HEK293 (cell line): ENCODE measurements at regions of chr17 and their contacts with region 1.

Region 1: GRCh38 chr17:74457146-74457819 is 9.2 kb upstream of the CD300A start:
- H3K4me3 ChIP-seq: no peak overlapping the region
- H3K27ac ChIP-seq: no peak overlapping the region
- H3K4me1 ChIP-seq: peaks cover 8% of the 10 kb centered on the region
- CTCF ChIP-seq: peak; percentile 92

Region 2: DNA sequence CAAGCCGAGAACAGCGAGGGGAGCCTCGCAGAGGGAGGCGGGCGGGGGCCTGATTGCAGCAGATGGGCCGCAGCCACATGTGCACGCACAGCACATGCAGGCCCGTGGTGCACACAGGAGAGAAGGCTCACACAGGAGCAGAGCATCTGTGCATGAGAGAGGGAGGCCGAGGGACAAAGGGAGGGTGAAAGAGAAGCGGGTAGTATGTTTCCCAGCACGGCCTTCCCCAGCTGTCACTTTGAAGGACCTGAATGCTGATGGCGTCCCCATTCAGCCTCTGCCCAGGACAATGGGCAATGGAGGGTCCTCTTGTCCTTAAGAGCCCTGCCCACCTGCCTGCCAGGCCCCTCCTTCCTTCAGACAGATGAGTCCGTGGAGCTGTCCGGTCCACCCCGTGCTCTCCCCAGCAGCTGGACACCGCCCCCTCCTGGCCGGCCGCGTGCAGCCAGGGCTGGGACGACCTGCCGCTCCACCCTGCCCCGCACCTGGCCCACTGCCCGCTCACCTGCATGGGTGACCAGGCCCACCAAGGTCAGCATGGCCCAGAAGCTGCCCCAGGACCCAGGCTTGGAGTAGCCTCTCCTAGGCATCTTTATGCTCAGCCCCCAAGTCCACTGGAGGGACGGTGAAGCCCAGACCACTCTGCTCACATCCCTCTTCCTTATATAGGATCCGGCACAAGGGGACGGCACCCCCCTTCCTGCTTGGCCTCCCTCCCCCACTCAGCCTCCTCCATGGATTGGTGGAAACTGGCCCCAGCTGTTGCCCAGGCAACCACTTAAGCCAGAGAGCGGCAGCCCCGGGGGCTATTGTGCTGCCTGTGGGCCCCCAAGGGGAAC is 95.8 kb before region 1 on chr17 and contains the start of gene BTBD17:
- CTCF ChIA-PET with region 1: interaction called, 26 read pairs
- POLR2A ChIA-PET with region 1: interaction called, 5 read pairs
- H3K4me3 ChIP-seq: no peak within 1 kb of the TSS
- H3K27ac ChIP-seq: no peak within 1 kb of the TSS
- H3K4me1 ChIP-seq: no peaks in the 10 kb centered on the region
- CTCF ChIP-seq: peak; percentile 79

Region 3: DNA sequence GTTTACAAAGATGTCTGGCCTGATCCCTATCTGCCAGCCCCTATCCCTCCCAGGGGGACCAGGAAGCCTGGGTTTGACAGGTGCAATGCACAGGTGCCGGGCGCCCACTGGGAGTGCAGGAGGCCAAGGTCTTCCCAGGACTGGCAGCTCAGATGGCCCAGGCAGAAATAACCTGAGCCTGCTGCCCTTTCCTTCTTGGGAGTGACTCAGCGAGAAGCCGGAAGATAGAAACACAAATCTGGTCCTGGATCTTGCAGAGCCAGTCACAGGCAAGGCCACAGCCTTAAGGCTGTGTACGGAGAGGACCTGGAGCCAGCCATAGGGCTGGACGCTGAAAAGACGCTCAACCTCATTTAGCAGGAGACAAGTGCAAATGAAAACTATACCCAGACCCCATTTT is 62.3 kb before region 1 on chr17:
- CTCF ChIA-PET with region 1: interaction called, 24 read pairs
- POLR2A ChIA-PET with region 1: no interaction called
- H3K4me3 ChIP-seq: no peak overlapping the region
- H3K27ac ChIP-seq: no peak overlapping the region
- H3K4me1 ChIP-seq: no peaks in the 10 kb centered on the region
- CTCF ChIP-seq: no peak

Region 4: GRCh38 chr17:74424657-74425056 is 32.6 kb before region 1 on chr17:
- CTCF ChIA-PET with region 1: interaction called, 19 read pairs
- POLR2A ChIA-PET with region 1: interaction called, 7 read pairs
- H3K4me3 ChIP-seq: no peak overlapping the region
- H3K27ac ChIP-seq: no peak overlapping the region
- H3K4me1 ChIP-seq: no peaks in the 10 kb centered on the region
- CTCF ChIP-seq: no peak

Region 5: GRCh38 chr17:74437702-74438101 is 19.6 kb before region 1 on chr17:
- CTCF ChIA-PET with region 1: interaction called, 151 read pairs
- POLR2A ChIA-PET with region 1: interaction called, 12 read pairs
- H3K4me3 ChIP-seq: no peak overlapping the region
- H3K27ac ChIP-seq: no peak overlapping the region
- H3K4me1 ChIP-seq: peaks cover 2% of the 10 kb centered on the region; the same call in 1 of the 2 replicates
- CTCF ChIP-seq: no peak

Region 6: GRCh38 chr17:74493381-74493833 is 36.1 kb after region 1 on chr17:
- CTCF ChIA-PET with region 1: interaction called, 22 read pairs
- POLR2A ChIA-PET with region 1: no interaction called
- H3K4me3 ChIP-seq: no peak overlapping the region
- H3K27ac ChIP-seq: no peak overlapping the region
- H3K4me1 ChIP-seq: no peaks in the 10 kb centered on the region
- CTCF ChIP-seq: 0 out of 2 replicates have a peak, but pooled peaks have one; percentile 40